ENCODE measurements at regions of chr17 and their contacts with region 1.

Region 1: DNA sequence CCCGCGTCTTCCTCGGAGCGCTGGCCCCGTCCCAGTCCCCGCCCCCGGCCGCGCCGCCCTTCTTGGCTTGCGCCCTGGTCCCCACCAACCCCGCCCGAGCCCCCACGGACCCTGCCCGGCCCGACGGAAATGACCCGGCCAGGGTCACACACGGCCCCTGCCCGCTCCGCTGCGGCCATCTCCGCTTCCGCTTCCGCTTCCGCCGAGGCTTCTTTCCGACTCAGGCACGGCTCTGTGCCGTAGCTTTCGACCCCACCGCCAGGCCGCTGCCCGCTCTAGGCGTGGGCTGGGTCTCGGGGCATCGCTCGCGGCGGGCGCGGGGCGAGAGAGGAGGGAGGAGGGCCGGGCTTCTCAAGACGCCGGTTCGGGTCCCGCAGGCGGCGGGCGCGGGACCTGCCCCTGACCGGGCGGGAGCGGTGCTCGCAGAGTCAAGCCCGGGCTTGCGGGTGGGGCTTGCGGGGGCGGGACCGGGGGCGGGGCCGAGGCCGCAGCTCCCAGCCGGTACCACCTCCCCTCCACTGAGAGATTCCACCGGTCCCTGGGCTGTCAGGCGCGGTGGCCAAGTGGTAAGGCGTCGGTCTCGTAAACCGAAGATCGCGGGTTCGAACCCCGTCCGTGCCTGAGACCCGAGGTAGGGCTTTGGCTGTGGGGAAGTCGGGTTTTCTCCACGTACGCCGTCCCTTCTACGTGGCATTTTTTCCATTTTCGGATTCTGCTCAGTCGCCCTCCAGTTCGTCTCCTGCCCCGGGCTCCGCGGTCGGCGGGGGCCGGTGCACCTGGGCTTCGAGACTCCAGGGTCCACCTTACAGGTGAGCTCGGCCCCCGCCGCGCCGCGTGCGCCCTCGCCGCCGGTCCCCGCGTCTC is 158.3 kb downstream of the RAB11FIP4 start:
- DNase-seq: peak; percentile 95
- H3K4me3 ChIP-seq: peak overlapping the region; percentile 72 to 89 (median 86)
- H3K27ac ChIP-seq: peak overlapping the region; percentile 85 to 94 (median 92)
- H3K4me1 ChIP-seq: peaks cover 0 to 13% (median 4%) of the 10 kb centered on the region in 4 donors
- H3K27me3 ChIP-seq: no peaks in the 10 kb centered on the region
- CTCF ChIP-seq: peak in 1 of 5 experiments; percentile 30
- EP300 ChIP-seq: no peak
- POLR2A ChIP-seq: peak; percentile 74

Region 2: DNA sequence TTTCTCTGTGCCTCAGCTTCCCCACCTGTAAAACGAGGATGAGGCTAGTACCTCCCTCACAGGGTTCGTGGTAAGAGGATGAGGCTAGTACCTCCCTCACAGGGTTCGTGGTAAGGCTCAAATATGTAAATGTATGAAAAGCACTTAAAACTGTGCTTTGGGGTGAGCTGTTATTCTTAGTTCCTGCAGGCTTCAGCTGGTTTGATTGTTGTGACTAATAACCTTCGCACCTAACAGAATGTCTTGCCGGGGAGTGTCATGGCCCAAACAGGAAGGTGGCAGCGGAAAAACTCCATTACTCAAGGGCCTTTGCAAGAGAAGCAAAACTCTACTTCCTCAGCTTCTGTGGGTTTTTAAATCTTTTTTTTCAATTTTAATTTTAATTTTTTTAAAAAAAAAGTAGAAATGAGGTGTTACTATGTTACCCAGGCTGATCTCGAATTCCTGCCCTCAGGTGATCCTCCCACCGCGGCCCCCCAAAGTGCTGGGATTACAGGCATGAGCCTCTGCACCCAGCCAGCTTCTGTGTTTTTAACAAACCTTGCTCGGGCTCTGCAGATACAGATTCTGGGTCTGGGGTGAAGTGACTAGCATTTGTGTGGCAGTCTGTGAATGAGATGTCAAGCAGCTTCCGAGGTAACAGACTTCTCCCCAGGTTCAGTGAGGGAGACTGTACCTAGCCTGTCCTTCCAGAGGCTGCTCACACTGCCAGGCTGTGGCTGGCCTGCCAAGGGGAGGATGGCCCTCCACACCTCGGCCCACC is 55.3 kb before region 1 on chr17:
- in situ Hi-C with region 1: loop called in 1 of 4 experiments (anchors 10 kb)
- intact Hi-C with region 1: no loop called
- DNase-seq: peak; percentile 61
- H3K4me3 ChIP-seq: no peak overlapping the region
- H3K27ac ChIP-seq: peak overlapping the region; percentile 73 to 94 (median 86)
- H3K4me1 ChIP-seq: peaks cover 16 to 67% (median 52%) of the 10 kb centered on the region in 4 donors
- H3K27me3 ChIP-seq: no peaks in the 10 kb centered on the region
- CTCF ChIP-seq: no peak
- EP300 ChIP-seq: no peak
- POLR2A ChIP-seq: no peak

Region 3: GRCh38 chr17:31581022-31581490 is 31.3 kb after region 1 on chr17:
- in situ Hi-C with region 1: no loop called
- intact Hi-C with region 1: no loop called
- DNase-seq: peak; percentile 59
- H3K4me3 ChIP-seq: no peak overlapping the region
- H3K27ac ChIP-seq: peak overlapping the region; percentile 66 to 85 (median 76)
- H3K4me1 ChIP-seq: peaks cover 17 to 30% (median 20%) of the 10 kb centered on the region in 4 donors
- H3K27me3 ChIP-seq: no peaks in the 10 kb centered on the region
- CTCF ChIP-seq: no peak
- EP300 ChIP-seq: no peak
- POLR2A ChIP-seq: no peak

Region 4: GRCh38 chr17:31623990-31624389 is 74.2 kb after region 1 on chr17:
- in situ Hi-C with region 1: no loop called
- intact Hi-C with region 1: no loop called
- DNase-seq: no peak
- H3K4me3 ChIP-seq: no peak overlapping the region
- H3K27ac ChIP-seq: no peak overlapping the region
- H3K4me1 ChIP-seq: no peaks in the 10 kb centered on the region
- H3K27me3 ChIP-seq: no peaks in the 10 kb centered on the region
- CTCF ChIP-seq: no peak
- EP300 ChIP-seq: no peak
- POLR2A ChIP-seq: no peak

Region 5: GRCh38 chr17:31696184-31696602 is 146.4 kb after region 1 on chr17:
- in situ Hi-C with region 1: no loop called
- intact Hi-C with region 1: loop called (anchors 10 kb)
- DNase-seq: peak; percentile 52
- H3K4me3 ChIP-seq: no peak overlapping the region
- H3K27ac ChIP-seq: peak overlapping the region; percentile 58 to 84 (median 77)
- H3K4me1 ChIP-seq: peaks cover 6 to 32% (median 18%) of the 10 kb centered on the region in 4 donors
- H3K27me3 ChIP-seq: no peaks in the 10 kb centered on the region
- CTCF ChIP-seq: peak in 1 of 5 experiments; percentile 38
- EP300 ChIP-seq: peak; percentile 52
- POLR2A ChIP-seq: no peak

Measured in transverse colon (tissue), 4 donors.